Activated T-helper 1 cell treated with anti-CD3 and anti-CD28 coated beads, Interleukin-12 subunit alpha, Interleukin-12 subunit beta, Interleukin-2, Interleukin-4 antibody, amounts not matched to agents 30 ng/mL and 10 ng/mL and 1 ng/mL, durations not matched to agents 14 hours and 24 hours and 36 hours (primary cell): ENCODE measurements at regions of chr7 and their contacts with region 1.

Region 1: DNA sequence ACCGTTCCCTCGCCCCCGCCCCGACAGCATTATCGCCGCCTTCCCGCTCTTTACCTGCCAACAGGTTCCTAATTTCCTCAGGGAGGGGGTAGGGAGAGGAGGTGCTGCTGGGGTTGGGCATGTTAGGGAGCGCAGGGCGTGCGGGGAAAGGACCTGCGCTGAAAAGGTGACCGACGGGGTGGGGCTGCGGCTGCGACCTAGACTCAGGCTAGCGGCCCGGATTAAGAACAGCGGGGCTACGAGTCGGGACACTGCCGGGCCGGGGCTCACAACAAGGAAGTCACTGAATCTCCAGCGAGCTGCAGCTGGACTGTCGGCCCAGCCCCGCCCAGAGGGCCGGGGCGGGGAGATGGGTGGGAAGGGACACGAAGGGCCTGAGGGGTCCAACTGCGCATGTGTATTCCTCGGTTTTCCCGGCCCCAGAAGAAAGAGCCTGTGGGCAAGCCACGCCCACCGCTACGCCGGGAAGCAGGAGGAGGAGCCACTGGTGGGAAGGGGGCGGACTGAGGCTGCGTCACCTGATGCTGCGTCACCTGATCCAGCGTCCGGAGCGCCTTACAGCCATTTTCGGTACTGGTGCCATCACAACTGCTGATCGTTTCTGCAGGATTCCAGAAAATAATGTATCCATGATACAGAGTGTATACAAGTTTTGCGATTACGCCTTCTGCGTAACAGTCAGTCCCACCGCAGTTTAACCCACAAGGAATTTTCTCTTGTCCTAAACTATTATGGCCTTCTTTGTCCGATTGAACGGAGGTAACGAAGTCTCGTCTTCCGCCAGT is at the start of gene SKAP2:
- DNase-seq: peak; percentile 83
- H3K4me3 Mint-ChIP-seq: peak within 1 kb of the TSS; percentile 93
- H3K27ac Mint-ChIP-seq: peak within 1 kb of the TSS; percentile 78
- H3K4me1 Mint-ChIP-seq: peaks cover 21% of the 10 kb centered on the region
- H3K27me3 Mint-ChIP-seq: peaks cover 29% of the 10 kb centered on the region
- total RNA-seq, gene SKAP2: 3.2 and 3.3 TPM in 2 replicates

Region 2: GRCh38 chr7:25125137-25125946 is 1739.2 kb before region 1 on chr7 and contains the start of gene CYCS:
- intact Hi-C with region 1: loop called (anchors 1 kb)
- DNase-seq: peak; percentile 100
- H3K4me3 Mint-ChIP-seq: peak within 1 kb of the TSS; percentile 93
- H3K27ac Mint-ChIP-seq: peak within 1 kb of the TSS; percentile 99
- H3K4me1 Mint-ChIP-seq: peaks cover 29% of the 10 kb centered on the region
- H3K27me3 Mint-ChIP-seq: no peaks in the 10 kb centered on the region
- total RNA-seq, gene CYCS: 280 TPM in 2 replicates

Region 3: GRCh38 chr7:26376175-26376917 is 488.2 kb before region 1 on chr7:
- intact Hi-C with region 1: loop called (anchors 10 kb)
- DNase-seq: peak; percentile 20
- H3K4me3 Mint-ChIP-seq: peak overlapping the region; percentile 79
- H3K27ac Mint-ChIP-seq: peak overlapping the region; percentile 79
- H3K4me1 Mint-ChIP-seq: peaks cover 7% of the 10 kb centered on the region
- H3K27me3 Mint-ChIP-seq: peaks cover 30% of the 10 kb centered on the region

Region 4: DNA sequence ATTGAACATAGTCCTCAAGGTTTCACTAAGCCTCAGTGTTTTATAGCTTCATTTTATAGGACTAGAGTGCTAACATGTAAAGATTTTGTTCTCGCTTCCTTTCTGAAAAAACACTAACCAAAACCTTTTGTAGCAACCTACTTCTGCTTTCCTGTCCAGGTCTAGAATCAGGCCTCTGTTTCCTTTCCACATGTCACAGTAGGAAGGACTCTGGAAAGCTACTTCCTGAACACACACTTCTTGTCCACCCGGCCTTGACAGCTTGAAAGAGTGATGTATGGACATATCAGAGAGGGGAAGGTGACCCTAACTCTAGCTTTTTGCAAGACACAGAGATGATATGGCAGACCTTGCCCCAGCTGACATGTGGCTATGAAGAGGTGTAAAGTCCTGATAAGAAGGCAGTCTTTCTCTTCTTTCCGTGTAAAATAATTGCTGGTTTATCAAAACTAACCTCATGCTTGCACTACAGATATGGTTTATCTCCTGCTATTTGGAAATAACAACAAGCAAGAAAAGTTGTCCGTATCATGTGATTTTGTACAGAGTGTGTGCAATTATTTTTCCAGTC is 175.5 kb before region 1 on chr7:
- intact Hi-C with region 1: no loop called
- DNase-seq: no peak
- H3K4me3 Mint-ChIP-seq: no peak overlapping the region
- H3K27ac Mint-ChIP-seq: no peak overlapping the region
- H3K4me1 Mint-ChIP-seq: no peaks in the 10 kb centered on the region
- H3K27me3 Mint-ChIP-seq: peaks cover 10% of the 10 kb centered on the region

Region 5: DNA sequence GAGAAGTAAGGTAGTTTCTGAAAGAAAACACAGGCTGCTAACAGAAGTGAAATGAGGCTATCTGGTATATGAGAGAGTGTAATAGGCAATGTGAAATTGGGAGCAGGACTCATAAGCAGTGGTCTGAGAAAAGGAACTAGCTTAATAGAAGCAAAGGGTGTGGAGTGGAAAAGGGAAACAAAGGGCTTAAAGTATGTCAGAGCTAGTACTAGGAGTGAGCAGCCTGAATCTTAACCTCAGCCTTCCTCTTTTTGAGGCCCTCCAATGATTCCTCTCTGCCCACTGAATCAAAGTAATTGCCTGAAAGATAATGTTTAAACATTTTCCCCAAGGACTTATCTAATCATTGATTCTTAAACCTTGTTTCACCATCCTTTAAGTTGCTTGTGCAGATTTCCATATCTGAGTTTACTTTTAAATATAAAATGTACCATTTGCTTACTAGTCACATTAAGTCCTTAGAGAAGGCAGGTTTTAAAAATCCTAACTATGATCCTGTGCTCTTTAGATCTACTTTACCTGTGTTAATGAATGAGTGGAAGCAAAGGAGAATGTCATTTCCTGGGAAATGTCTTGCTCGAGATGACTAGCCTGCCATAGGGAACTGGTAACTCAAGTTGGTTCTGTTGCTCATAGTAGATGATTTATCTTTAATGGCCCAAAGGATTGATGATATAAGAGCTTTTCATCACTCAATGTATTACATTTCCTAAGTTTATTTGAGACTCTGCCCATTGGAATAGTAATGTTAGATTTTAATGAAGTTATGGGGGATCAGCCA is 155.1 kb before region 1 on chr7:
- intact Hi-C with region 1: no loop called
- DNase-seq: no peak
- H3K4me3 Mint-ChIP-seq: no peak overlapping the region
- H3K27ac Mint-ChIP-seq: no peak overlapping the region
- H3K4me1 Mint-ChIP-seq: no peaks in the 10 kb centered on the region
- H3K27me3 Mint-ChIP-seq: peaks cover 12% of the 10 kb centered on the region

Region 6: GRCh38 chr7:27130540-27131389 is 266.3 kb after region 1 on chr7 and contains the start of gene HOXA4:
- intact Hi-C with region 1: loop called (anchors 1 kb)
- DNase-seq: peak; percentile 67
- H3K4me3 Mint-ChIP-seq: peak within 1 kb of the TSS; percentile 51
- H3K27ac Mint-ChIP-seq: no peak within 1 kb of the TSS
- H3K4me1 Mint-ChIP-seq: peaks cover 27% of the 10 kb centered on the region
- H3K27me3 Mint-ChIP-seq: peaks cover 51% of the 10 kb centered on the region
- total RNA-seq, gene HOXA4: not detected in 2 replicates

Region 7: DNA sequence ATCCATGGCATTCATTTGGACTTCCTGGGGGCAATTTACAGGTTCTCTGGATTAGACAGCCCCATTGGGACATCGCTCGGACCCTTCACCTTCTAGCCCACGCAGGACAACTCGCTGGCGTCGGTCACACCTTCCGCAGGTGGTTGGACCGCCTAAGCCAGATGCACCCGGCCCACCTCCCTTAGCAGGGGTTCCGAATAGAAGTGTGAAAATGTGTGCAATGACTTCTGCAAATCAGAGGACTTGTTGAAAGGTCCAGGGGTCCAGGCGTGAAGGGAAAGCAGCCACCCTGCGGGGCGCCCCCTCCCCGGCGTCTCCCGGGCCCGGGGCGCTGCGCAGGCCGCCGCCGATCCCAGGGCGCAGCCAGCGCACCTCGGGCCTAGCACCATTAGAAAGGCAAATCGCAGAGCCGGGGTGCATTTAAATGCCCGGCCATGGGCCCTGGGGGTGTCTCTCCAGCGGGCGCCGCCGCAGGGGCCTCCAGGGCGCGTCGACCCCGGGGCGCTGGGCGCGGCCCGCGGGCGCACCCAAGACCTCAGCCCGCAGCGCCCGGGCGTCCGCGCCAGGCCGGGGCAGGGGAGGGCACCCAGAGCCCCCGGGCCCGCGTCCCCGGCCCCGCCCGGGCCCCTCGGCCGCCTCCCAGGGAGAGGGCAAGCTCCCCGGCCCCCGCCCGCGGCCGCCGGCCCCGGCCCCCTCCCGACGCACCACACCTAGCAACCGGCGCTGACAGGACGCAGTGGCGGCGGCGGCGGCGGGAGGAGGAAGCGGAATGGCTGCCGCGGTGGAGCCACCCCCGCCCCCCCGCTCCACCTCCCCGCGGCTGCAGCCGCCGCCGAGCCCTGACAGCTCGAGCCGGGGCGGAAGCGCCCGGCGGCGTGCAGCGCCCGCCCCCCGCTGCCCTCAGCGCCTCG is 1314.9 kb after region 1 on chr7:
- intact Hi-C with region 1: loop called (anchors 10 kb)
- DNase-seq: peak; percentile 57
- H3K4me3 Mint-ChIP-seq: peak overlapping the region; percentile 82
- H3K27ac Mint-ChIP-seq: peak overlapping the region; percentile 62
- H3K4me1 Mint-ChIP-seq: peaks cover 23% of the 10 kb centered on the region
- H3K27me3 Mint-ChIP-seq: peaks cover 31% of the 10 kb centered on the region